ENCODE measurements at regions of chr5 and their contacts with region 1.

Region 1: DNA sequence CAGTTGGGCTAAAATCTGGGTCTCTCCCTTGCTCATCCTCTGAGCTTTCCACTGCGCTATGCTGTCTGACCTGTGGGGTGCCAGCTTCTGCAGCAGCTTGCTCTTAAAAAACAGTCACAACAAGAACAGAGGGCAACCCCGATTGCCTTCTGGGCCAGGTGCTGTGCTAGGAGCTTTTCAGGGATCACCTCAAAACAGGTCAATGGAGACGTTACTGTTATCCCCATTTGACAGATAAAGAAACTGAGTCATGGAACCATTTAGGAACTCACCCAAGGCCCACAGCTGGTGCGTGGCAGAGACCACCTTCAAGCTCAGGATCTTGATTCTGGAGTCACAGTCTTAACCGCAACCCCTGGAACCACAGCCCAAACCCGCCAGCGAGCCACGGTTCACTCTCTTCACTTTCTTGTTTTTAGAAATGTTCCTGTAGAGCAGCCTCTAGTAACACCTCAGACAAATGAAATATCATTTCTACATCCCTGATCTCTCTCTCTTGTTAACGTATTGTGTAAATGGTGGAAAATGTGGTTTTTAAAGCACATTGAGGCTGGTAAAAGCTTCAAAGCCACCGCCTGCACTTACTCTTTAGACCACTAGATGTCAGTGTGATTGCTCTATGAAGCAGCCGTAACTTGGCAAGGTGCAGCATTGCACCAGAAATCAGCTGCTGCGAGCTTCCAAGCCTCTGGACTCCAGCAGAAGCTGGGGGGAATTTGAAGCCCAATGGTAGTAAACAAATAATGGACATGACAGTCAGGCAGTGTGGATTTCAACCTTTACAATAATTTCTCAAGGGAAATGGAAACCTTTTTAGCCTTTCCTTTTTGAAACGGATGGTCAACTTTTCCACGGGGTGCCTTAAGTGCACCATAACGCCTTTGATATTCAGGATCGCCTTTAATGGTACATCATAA is 1.7 kb downstream of the FYB1 start:
- DNase-seq: peak; percentile 62 to 91 (median 74)
- ATAC-seq: peak; percentile 62
- H3K4me3 ChIP-seq: peak overlapping the region; percentile 65
- H3K4me3 Mint-ChIP-seq: peak overlapping the region; percentile 83
- H3K27ac ChIP-seq: peak overlapping the region; percentile 72 to 83
- H3K27ac Mint-ChIP-seq: peak overlapping the region; percentile 96
- H3K4me1 ChIP-seq: peaks cover 58% of the 10 kb centered on the region
- H3K4me1 Mint-ChIP-seq: peaks cover 86% of the 10 kb centered on the region
- H3K27me3 ChIP-seq: no peaks in the 10 kb centered on the region
- H3K27me3 Mint-ChIP-seq: no peaks in the 10 kb centered on the region
- CTCF ChIP-seq: peak; percentile 96

Region 2: DNA sequence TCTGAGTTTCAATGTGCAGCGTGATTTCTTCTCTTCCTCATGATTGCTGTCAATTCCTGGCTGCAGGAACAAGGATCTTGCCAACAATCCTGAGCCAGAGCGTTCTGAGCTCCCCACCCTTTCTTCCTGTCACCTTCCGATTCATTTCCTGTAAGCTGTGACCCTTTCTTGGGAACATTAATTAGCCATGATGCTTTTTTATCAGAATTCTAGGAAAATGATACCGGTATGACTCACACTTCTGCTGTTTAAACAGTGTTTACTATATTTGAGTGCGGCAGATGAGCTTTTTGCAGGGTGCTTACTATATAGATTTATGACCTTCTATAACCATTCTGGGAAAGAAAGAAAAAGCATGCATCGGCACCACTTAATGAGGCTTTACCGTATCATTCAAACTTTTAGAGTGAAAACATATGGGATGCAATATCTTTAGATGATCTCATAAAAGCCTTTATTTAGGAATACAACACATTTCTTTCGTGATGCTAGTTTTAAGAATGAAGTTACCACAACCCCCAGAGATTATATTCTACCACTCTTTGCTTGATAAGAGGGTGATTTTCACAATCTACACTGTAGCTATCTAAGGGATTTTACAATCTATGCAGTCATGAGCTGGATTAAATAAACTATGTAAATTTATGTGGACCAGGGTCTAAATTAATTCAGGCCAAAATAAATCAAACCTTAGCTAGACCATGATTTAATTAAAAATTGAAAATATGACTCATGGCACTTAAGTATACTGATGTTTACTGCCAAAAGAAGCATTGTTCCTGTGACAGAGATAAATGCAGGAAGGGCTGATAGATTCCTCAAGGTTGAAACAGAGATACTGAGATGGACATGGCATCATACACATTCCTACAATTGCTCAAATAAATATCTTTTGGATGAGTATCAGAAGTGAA is 409.8 kb before region 1 on chr5:
- CTCF ChIA-PET with region 1: no interaction called
- POLR2A ChIA-PET with region 1: no interaction called
- intact Hi-C with region 1: no loop called
- DNase-seq: no peak
- ATAC-seq: no peak
- H3K4me3 ChIP-seq: no peak overlapping the region
- H3K4me3 Mint-ChIP-seq: no peak overlapping the region
- H3K27ac ChIP-seq: no peak overlapping the region
- H3K27ac Mint-ChIP-seq: no peak overlapping the region
- H3K4me1 ChIP-seq: no peaks in the 10 kb centered on the region
- H3K4me1 Mint-ChIP-seq: no peaks in the 10 kb centered on the region
- H3K27me3 ChIP-seq: peaks cover 17 to 19% of the 10 kb centered on the region in 2 experiments
- H3K27me3 Mint-ChIP-seq: peaks cover 45% of the 10 kb centered on the region
- CTCF ChIP-seq: no peak

Region 3: DNA sequence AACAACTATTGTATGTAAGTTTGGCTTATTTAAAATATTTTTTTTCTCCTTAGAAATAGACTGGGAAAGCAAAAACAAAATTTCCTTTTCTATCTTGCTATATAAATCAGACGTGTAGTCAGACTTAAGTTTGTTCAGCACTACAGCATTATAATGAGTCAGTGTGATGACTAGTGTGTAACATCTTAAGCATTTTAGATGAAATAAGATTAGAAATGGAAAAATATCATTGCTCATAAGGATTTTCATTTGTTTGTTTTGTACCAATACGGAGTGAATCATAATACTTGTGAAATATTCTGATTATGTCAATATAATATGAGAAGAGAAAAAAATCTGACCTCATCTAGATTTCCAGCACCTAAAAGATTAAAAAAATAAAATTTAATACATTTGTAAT is 78.7 kb before region 1 on chr5:
- CTCF ChIA-PET with region 1: interaction called, 10 read pairs
- POLR2A ChIA-PET with region 1: interaction called, 3 read pairs
- intact Hi-C with region 1: no loop called
- DNase-seq: no peak
- ATAC-seq: no peak
- H3K4me3 ChIP-seq: no peak overlapping the region
- H3K4me3 Mint-ChIP-seq: no peak overlapping the region
- H3K27ac ChIP-seq: no peak overlapping the region
- H3K27ac Mint-ChIP-seq: peak overlapping the region; percentile 73
- H3K4me1 ChIP-seq: no peaks in the 10 kb centered on the region
- H3K4me1 Mint-ChIP-seq: peaks cover 36% of the 10 kb centered on the region
- H3K27me3 ChIP-seq: no peaks in the 10 kb centered on the region
- H3K27me3 Mint-ChIP-seq: no peaks in the 10 kb centered on the region
- CTCF ChIP-seq: no peak

Region 4: GRCh38 chr5:39164529-39165402 is 52.9 kb before region 1 on chr5:
- CTCF ChIA-PET with region 1: interaction called, 22 read pairs
- POLR2A ChIA-PET with region 1: interaction called, 18 read pairs
- intact Hi-C with region 1: no loop called
- DNase-seq: peak in 4 of 14 experiments; percentile 40 to 76 (median 60)
- ATAC-seq: peak; percentile 79
- H3K4me3 ChIP-seq: peak overlapping the region; percentile 13
- H3K4me3 Mint-ChIP-seq: peak overlapping the region; percentile 81
- H3K27ac ChIP-seq: peak overlapping the region; percentile 59 to 64
- H3K27ac Mint-ChIP-seq: peak overlapping the region; percentile 96
- H3K4me1 ChIP-seq: peaks cover 53% of the 10 kb centered on the region
- H3K4me1 Mint-ChIP-seq: peaks cover 96% of the 10 kb centered on the region
- H3K27me3 ChIP-seq: no peaks in the 10 kb centered on the region
- H3K27me3 Mint-ChIP-seq: no peaks in the 10 kb centered on the region
- CTCF ChIP-seq: no peak

Region 5: GRCh38 chr5:39194466-39195136 is 23.0 kb before region 1 on chr5:
- CTCF ChIA-PET with region 1: interaction called, 140 read pairs
- POLR2A ChIA-PET with region 1: interaction called, 209 read pairs
- intact Hi-C with region 1: no loop called
- DNase-seq: peak in 1 of 14 experiments; percentile 52
- ATAC-seq: no peak
- H3K4me3 ChIP-seq: peak overlapping the region; percentile 76
- H3K4me3 Mint-ChIP-seq: peak overlapping the region; percentile 85
- H3K27ac ChIP-seq: peak overlapping the region; percentile 79 to 83
- H3K27ac Mint-ChIP-seq: peak overlapping the region; percentile 96
- H3K4me1 ChIP-seq: peaks cover 50% of the 10 kb centered on the region
- H3K4me1 Mint-ChIP-seq: peaks cover 77% of the 10 kb centered on the region
- H3K27me3 ChIP-seq: no peaks in the 10 kb centered on the region
- H3K27me3 Mint-ChIP-seq: no peaks in the 10 kb centered on the region
- CTCF ChIP-seq: no peak

Region 6: DNA sequence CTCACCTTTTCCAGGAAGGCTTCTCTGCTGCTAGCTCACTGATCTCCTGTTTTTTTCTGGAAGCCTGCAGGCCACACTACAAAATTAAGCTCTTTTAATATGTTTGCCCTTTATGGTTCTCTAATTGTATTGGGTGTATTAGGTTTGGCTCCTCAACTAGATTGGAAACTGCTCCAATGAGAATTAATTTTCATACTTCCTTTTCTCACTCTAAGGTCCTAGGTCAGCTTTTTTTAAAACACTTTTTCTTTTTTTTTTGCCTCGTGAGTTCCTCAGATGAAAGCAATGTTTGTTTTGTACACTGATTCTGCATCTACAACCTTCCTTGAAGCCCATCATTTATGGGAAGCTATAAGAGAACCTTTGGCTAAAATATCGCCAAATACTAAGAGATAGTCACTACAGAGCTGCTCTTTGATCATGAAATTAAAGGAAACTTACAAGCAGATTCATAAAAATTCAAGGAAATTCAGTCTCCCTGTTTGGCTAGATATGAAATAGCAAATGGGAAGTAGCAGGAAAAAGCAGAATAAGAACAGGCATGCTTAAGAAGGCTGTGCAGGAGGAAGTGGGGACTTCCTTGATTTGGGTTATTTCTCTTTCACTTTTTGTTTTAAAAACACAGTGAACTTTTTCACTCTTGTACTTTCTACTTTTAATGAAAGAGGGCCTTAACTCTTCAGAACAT is 56.9 kb after region 1 on chr5:
- CTCF ChIA-PET with region 1: interaction called, 23 read pairs
- POLR2A ChIA-PET with region 1: interaction called, 55 read pairs
- intact Hi-C with region 1: loop called (anchors 2 kb)
- DNase-seq: peak in 4 of 14 experiments; percentile 23 to 80 (median 67)
- ATAC-seq: peak; percentile 69
- H3K4me3 ChIP-seq: peak overlapping the region; percentile 35
- H3K4me3 Mint-ChIP-seq: peak overlapping the region; percentile 84
- H3K27ac ChIP-seq: peak overlapping the region; percentile 47 to 80
- H3K27ac Mint-ChIP-seq: peak overlapping the region; percentile 97
- H3K4me1 ChIP-seq: peaks cover 28% of the 10 kb centered on the region
- H3K4me1 Mint-ChIP-seq: peaks cover 55% of the 10 kb centered on the region
- H3K27me3 ChIP-seq: no peaks in the 10 kb centered on the region
- H3K27me3 Mint-ChIP-seq: no peaks in the 10 kb centered on the region
- CTCF ChIP-seq: no peak

Region 7: DNA sequence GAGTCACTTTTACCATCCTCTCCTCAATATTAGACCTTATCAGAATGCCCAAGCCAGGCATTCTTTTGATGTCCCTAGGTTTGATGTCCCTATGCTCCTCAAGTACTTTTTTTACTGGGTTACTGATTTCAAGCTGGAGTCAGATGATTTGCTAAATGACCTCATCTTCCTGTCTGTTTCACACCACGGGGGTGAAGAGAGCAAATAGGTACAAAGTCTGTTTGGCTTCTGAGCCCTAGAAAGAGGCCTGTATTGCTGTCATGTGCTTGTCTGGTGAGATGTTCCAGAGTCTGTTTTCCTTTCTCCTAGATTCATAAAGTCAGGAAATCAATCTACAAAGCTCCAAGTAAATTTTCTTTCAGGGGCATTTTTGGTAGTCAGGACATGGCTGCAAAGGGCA is 219.8 kb after region 1 on chr5:
- CTCF ChIA-PET with region 1: no interaction called
- POLR2A ChIA-PET with region 1: no interaction called
- intact Hi-C with region 1: no loop called
- DNase-seq: peak in 1 of 14 experiments; percentile 19
- ATAC-seq: no peak
- H3K4me3 ChIP-seq: no peak overlapping the region
- H3K4me3 Mint-ChIP-seq: no peak overlapping the region
- H3K27ac ChIP-seq: no peak overlapping the region
- H3K27ac Mint-ChIP-seq: no peak overlapping the region
- H3K4me1 ChIP-seq: no peaks in the 10 kb centered on the region
- H3K4me1 Mint-ChIP-seq: no peaks in the 10 kb centered on the region
- H3K27me3 ChIP-seq: peaks cover 0 to 9% of the 10 kb centered on the region in 2 experiments
- H3K27me3 Mint-ChIP-seq: peaks cover 16% of the 10 kb centered on the region
- CTCF ChIP-seq: no peak

Region 8: GRCh38 chr5:39547553-39548154 is 330.0 kb after region 1 on chr5:
- CTCF ChIA-PET with region 1: interaction called, 7 read pairs
- POLR2A ChIA-PET with region 1: interaction called, 3 read pairs
- intact Hi-C with region 1: loop called (anchors 2 to 5 kb)
- DNase-seq: peak in 4 of 14 experiments; percentile 21 to 65 (median 58)
- ATAC-seq: no peak
- H3K4me3 ChIP-seq: no peak overlapping the region
- H3K4me3 Mint-ChIP-seq: no peak overlapping the region
- H3K27ac ChIP-seq: no peak overlapping the region
- H3K27ac Mint-ChIP-seq: no peak overlapping the region
- H3K4me1 ChIP-seq: no peaks in the 10 kb centered on the region
- H3K4me1 Mint-ChIP-seq: peaks cover 7% of the 10 kb centered on the region
- H3K27me3 ChIP-seq: peaks cover 0 to 6% of the 10 kb centered on the region in 2 experiments
- H3K27me3 Mint-ChIP-seq: peaks cover 8% of the 10 kb centered on the region
- CTCF ChIP-seq: peak; percentile 84